PC-3 (cell line): ENCODE measurements at regions of chr18 and their contacts with region 1.

Region 1: GRCh38 chr18:22999212-22999611 is 66.1 kb downstream of the RBBP8 start:
- DNase-seq: no peak
- ATAC-seq: no peak
- H3K4me3 ChIP-seq: no peak overlapping the region
- H3K27ac ChIP-seq: no peak overlapping the region
- H3K4me1 ChIP-seq: no peaks in the 10 kb centered on the region
- H3K27me3 ChIP-seq: no peaks in the 10 kb centered on the region
- CTCF ChIP-seq: no peak

Region 2: DNA sequence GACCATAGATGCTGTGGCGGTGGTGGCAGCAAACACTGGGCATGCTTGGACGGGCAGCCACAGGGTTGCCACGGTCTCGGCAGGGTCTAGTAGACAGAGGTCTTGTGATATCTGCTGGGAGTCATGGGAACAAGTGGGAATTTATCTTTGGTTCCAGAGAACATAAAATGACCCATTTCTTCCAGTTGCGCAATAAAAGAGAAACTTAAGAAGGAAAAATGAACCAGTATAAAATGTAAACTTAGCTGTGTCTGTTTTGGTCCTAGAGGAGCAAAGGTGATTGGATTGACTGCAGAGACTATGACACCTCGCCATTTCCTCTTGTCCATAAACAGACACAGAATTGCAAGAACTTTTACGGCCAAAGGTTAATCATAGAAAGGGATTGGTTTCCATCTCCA is 198.7 kb before region 1 on chr18:
- CTCF ChIA-PET with region 1: no interaction called
- POLR2A ChIA-PET with region 1: no interaction called
- intact Hi-C with region 1: no loop called
- DNase-seq: no peak
- ATAC-seq: no peak
- H3K4me3 ChIP-seq: no peak overlapping the region
- H3K27ac ChIP-seq: no peak overlapping the region
- H3K4me1 ChIP-seq: peaks cover 12% of the 10 kb centered on the region
- H3K27me3 ChIP-seq: no peaks in the 10 kb centered on the region
- CTCF ChIP-seq: no peak

Region 3: GRCh38 chr18:22912835-22913234 is 86.4 kb before region 1 on chr18:
- CTCF ChIA-PET with region 1: no interaction called
- POLR2A ChIA-PET with region 1: no interaction called
- intact Hi-C with region 1: no loop called
- DNase-seq: no peak
- ATAC-seq: no peak
- H3K4me3 ChIP-seq: no peak overlapping the region
- H3K27ac ChIP-seq: no peak overlapping the region
- H3K4me1 ChIP-seq: peaks cover 22% of the 10 kb centered on the region
- H3K27me3 ChIP-seq: no peaks in the 10 kb centered on the region
- CTCF ChIP-seq: no peak

Region 4: GRCh38 chr18:23088310-23088870 is 89.2 kb after region 1 on chr18:
- CTCF ChIA-PET with region 1: no interaction called
- POLR2A ChIA-PET with region 1: no interaction called
- intact Hi-C with region 1: no loop called
- DNase-seq: no peak
- ATAC-seq: no peak
- H3K4me3 ChIP-seq: no peak overlapping the region
- H3K27ac ChIP-seq: no peak overlapping the region
- H3K4me1 ChIP-seq: no peaks in the 10 kb centered on the region
- H3K27me3 ChIP-seq: no peaks in the 10 kb centered on the region
- CTCF ChIP-seq: no peak

Region 5: DNA sequence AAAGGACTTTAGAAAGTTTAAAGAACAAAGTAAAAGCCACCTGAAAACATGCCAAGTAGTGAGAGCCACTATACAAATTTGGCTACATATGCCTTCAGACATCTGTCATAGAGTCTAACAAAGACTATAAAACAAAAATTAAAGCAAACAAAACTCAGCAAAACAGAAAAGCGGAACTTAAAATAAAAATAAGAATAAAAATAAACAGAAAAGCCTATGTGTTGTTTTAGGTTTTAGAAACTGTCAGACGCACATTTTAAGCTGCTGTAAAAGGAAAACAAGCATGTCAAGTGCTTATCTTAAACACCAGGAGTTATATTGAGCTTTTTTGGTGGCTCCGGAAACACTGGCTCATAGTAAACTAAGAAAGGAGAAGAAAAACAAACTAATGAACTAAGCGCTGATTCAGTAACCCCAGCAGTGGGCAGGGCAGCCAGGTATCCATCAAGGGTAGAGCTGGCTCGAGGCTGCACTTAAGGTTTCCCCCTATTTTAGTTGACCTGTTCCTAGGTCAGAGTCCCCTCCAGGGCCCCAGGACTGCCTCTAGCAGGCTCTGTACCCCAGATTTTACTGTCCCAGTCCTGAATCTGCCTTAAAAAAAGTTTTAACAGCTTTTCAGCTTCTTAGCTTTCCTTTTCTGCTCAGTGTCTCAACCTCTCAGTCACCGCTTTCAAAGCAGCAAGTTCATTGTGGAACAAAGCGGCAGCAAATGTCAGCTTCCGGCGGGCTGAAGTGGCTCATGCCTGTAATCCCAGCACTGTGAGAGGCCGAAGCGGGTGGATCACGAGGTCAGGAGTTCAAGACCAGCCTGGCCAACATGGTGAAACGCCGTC is 488.7 kb after region 1 on chr18:
- CTCF ChIA-PET with region 1: no interaction called
- POLR2A ChIA-PET with region 1: interaction called, 37 read pairs
- intact Hi-C with region 1: no loop called
- DNase-seq: peak; percentile 76
- ATAC-seq: peak; percentile 92
- H3K4me3 ChIP-seq: peak overlapping the region; percentile 66
- H3K27ac ChIP-seq: peak overlapping the region; percentile 83
- H3K4me1 ChIP-seq: peaks cover 19% of the 10 kb centered on the region
- H3K27me3 ChIP-seq: no peaks in the 10 kb centered on the region
- CTCF ChIP-seq: no peak